MCF 10A (cell line): ENCODE measurements at regions of chr9 and their contacts with region 1.

Region 1: DNA sequence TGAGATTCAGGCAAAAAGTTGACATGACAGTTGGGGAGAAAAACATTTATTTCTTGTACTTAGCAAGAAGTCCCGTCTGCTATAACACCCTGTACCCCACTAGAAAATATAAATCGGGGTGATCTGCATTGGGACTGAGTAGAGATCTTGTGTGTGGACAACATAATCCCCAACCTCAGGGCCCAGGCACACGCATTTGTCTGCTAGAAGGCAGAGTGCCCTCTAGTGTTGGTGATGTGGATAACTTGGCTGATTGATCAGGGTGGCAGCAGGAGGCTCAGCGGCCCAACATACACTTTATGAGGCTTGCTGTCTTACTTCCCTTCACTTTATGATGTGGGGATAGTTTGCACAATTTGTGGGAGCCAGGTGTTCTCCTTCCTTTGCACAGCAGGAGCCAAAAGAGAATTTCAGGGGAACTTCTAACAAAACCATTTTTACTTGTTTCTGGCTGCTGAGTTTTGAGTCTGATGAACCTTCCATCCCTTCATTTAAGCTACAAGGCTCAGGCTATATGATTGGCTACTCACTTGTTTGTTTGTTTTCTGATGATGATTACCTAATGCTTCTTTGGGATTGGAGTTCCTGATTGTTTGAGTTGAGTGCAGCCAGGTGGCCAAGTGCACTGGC is 263.2 kb downstream of the DMAC1 start:
- DNase-seq: peak; percentile 75
- H3K4me3 Mint-ChIP-seq: no peak overlapping the region
- H3K27ac Mint-ChIP-seq: no peak overlapping the region
- H3K4me1 Mint-ChIP-seq: no peaks in the 10 kb centered on the region
- H3K27me3 Mint-ChIP-seq: peaks cover 19% of the 10 kb centered on the region
- CTCF ChIP-seq: peak; percentile 68

Region 2: GRCh38 chr9:6931913-6932312 is 604.5 kb before region 1 on chr9:
- CTCF ChIA-PET with region 1: no interaction called
- POLR2A ChIA-PET with region 1: no interaction called
- intact Hi-C with region 1: no loop called
- DNase-seq: peak; percentile 85
- H3K4me3 Mint-ChIP-seq: peak overlapping the region; percentile 20
- H3K27ac Mint-ChIP-seq: peak overlapping the region; percentile 47
- H3K4me1 Mint-ChIP-seq: peaks cover 23% of the 10 kb centered on the region
- H3K27me3 Mint-ChIP-seq: no peaks in the 10 kb centered on the region
- CTCF ChIP-seq: no peak

Region 3: GRCh38 chr9:7051711-7052110 is 484.7 kb before region 1 on chr9:
- CTCF ChIA-PET with region 1: interaction called, 13 read pairs
- POLR2A ChIA-PET with region 1: no interaction called
- intact Hi-C with region 1: loop called (anchors 1 kb)
- DNase-seq: no peak
- H3K4me3 Mint-ChIP-seq: no peak overlapping the region
- H3K27ac Mint-ChIP-seq: no peak overlapping the region
- H3K4me1 Mint-ChIP-seq: peaks cover 6% of the 10 kb centered on the region
- H3K27me3 Mint-ChIP-seq: no peaks in the 10 kb centered on the region
- CTCF ChIP-seq: no peak

Region 4: GRCh38 chr9:7246917-7247522 is 289.4 kb before region 1 on chr9:
- CTCF ChIA-PET with region 1: no interaction called
- POLR2A ChIA-PET with region 1: no interaction called
- intact Hi-C with region 1: no loop called
- DNase-seq: peak; percentile 29
- H3K4me3 Mint-ChIP-seq: no peak overlapping the region
- H3K27ac Mint-ChIP-seq: no peak overlapping the region
- H3K4me1 Mint-ChIP-seq: no peaks in the 10 kb centered on the region
- H3K27me3 Mint-ChIP-seq: peaks cover 12% of the 10 kb centered on the region
- CTCF ChIP-seq: no peak

Region 5: DNA sequence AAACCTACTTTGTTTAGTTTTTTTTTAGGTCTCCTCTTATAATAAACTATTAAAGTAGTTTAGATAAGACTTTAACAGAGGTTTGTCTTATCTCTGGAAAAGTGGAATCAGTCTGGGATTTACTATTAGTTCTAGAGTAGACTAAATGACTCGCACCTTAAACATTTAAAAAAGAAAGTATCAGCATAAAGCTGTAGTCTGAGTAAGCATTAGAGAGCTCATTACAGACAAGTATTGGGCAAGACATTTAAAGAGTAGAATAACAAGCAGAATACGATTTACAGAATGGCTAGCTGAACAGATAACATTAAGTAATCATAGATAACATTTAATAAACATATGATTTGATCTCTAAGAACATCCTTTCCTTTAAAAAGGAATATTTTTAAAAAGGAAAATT is 489.1 kb after region 1 on chr9:
- CTCF ChIA-PET with region 1: no interaction called
- POLR2A ChIA-PET with region 1: no interaction called
- intact Hi-C with region 1: no loop called
- DNase-seq: no peak
- H3K4me3 Mint-ChIP-seq: no peak overlapping the region
- H3K27ac Mint-ChIP-seq: no peak overlapping the region
- H3K4me1 Mint-ChIP-seq: no peaks in the 10 kb centered on the region
- H3K27me3 Mint-ChIP-seq: no peaks in the 10 kb centered on the region
- CTCF ChIP-seq: no peak